Mammary epithelial cell (primary cell): ENCODE measurements at regions of chr16 and their contacts with region 1.

Region 1: GRCh38 chr16:53566552-53567245 is 63.7 kb upstream of the AKTIP start:
- DNase-seq: no peak
- H3K4me3 ChIP-seq: no peak overlapping the region
- H3K27ac ChIP-seq: no peak overlapping the region
- H3K4me1 ChIP-seq: no peaks in the 10 kb centered on the region
- H3K27me3 ChIP-seq: no peaks in the 10 kb centered on the region
- CTCF ChIP-seq: no peak

Region 2: DNA sequence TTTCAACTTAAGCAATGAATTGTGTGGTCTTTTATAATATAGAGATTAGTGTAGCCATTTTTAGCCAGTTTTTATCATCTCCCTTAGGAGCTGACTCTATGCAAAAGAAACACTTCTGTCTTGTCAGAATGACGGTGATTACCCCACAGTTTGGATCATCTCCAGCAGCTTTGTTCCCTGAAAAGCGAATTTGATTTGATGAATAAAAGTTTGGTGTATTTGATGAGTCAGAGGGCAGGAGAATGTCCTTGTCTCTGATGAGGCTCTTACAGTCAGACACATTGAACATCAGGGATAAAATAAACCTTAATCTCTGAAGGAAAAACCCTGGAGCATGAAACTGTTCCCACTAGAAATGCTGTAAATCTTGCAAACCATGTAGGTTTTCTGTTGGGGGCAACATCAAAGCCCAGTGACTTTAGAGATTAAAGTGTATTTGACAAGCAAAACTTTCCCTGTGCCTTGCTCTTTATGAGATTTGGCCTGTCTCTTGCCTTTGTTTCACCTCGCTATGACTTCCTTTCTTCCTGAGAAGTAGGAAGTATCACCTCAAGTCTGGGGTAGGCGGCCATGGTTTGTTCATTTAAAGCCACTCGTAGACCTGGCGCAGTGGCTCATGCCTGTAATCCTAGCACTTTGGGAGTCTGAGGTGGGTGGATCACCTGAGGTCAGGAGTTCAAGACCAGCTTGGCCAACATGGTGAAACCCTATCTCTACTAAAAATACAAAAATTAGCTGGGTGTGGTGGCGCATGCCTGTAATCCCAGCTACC is 346.6 kb after region 1 on chr16:
- CTCF ChIA-PET with region 1: no interaction called
- dilution Hi-C with region 1: loop called (anchors 10 kb)
- in situ Hi-C with region 1: no loop called
- intact Hi-C with region 1: no loop called
- DNase-seq: peak; percentile 79
- H3K4me3 ChIP-seq: no peak overlapping the region
- H3K27ac ChIP-seq: peak overlapping the region; percentile 56
- H3K4me1 ChIP-seq: peaks cover 22% of the 10 kb centered on the region
- H3K27me3 ChIP-seq: no peaks in the 10 kb centered on the region
- CTCF ChIP-seq: no peak